Activated T-helper 2 cell treated with anti-CD3 and anti-CD28 coated beads, Interferon-gamma antibody, Interleukin-2, Interleukin-4, amounts not matched to agents 10 μg/mL and 5 μg/mL and 100 μg/mL, durations not matched to agents 14 hours and 24 hours and 36 hours (primary cell): ENCODE measurements at regions of chr19 and their contacts with region 1.

Region 1: DNA sequence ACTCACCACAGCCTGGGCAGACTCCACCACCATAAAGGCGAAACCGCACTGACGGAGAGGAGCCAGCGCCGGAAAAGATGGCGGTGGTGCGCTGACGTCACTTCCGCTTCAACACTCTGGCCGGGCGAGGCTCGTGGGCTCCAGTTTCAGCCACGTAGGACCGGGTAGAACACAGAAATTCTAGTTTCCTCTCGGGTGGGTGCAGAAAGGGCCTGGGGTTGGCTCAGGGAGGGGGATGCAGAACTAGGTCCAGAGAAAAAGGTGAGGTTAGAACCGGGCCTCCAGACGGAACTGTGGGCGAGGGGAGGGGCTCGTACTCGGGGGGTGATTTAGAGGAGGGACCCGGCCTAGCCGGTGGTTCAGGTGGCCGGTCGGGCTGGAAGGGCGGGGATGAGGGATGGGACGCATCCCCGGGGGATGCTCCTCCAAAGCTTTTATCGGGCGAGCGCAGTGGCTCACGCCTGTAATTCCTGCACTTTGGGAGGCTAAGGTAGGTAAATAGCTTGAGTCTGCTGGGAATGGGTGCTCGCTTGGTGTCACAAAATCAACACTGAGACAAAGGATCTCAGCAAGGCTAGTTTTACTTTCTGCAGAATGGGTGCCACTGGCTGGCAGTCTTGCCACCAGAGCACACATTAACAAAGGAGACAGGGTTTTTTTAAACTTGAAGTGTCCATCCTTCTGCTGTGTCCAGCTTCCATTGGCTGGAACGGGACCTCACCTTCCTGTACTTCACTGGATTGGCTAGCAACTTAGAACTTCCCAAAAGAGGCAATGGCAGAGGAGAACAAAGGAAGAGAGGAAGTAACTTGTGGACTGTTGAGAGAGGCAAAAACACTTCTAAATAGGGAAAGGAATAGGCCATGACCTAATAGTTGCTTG is at the start of gene ZNF561:
- DNase-seq: peak; percentile 84
- H3K4me3 Mint-ChIP-seq: peak within 1 kb of the TSS; percentile 93
- H3K27ac Mint-ChIP-seq: peak within 1 kb of the TSS; percentile 99
- H3K4me1 Mint-ChIP-seq: peaks cover 19% of the 10 kb centered on the region
- H3K27me3 Mint-ChIP-seq: no peaks in the 10 kb centered on the region
- total RNA-seq, gene ZNF561: 27.1 and 28.3 TPM in 2 replicates

Region 2: DNA sequence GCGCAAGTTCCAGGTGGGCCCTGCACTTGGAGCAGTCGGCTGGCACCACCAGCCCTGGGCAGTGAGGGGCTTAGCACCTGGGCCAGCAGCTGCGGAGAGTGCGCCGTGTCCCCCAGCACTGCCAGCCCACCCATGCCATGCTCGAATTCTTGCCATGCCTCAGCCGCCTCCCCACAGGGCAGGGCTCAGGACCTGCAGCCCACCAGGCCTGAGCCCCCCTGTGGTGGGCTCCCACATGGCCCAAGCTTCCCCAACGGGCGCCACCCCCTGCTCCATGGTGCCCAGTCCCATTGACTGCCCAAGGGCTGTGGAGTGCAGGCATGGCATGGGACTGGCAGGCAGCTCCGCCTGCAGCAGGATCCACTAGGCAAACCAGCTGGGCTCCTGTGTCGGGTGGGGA is 73.5 kb before region 1 on chr19:
- intact Hi-C with region 1: no loop called
- DNase-seq: no peak
- H3K4me3 Mint-ChIP-seq: no peak overlapping the region
- H3K27ac Mint-ChIP-seq: no peak overlapping the region
- H3K4me1 Mint-ChIP-seq: no peaks in the 10 kb centered on the region
- H3K27me3 Mint-ChIP-seq: no peaks in the 10 kb centered on the region

Region 3: GRCh38 chr19:9584073-9584833 is 37.1 kb before region 1 on chr19 and contains the start of gene ZNF121:
- intact Hi-C with region 1: loop called (anchors 1 kb)
- DNase-seq: peak; percentile 77
- H3K4me3 Mint-ChIP-seq: peak within 1 kb of the TSS; percentile 91
- H3K27ac Mint-ChIP-seq: peak within 1 kb of the TSS; percentile 92
- H3K4me1 Mint-ChIP-seq: peaks cover 12% of the 10 kb centered on the region
- H3K27me3 Mint-ChIP-seq: peaks cover 2% of the 10 kb centered on the region
- total RNA-seq, gene ZNF121: 57.2 and 62.2 TPM in 2 replicates

Region 4: GRCh38 chr19:9768175-9769112 is 147.0 kb after region 1 on chr19 and contains the start of gene ZNF846:
- intact Hi-C with region 1: loop called (anchors 1 kb)
- DNase-seq: peak; percentile 90
- H3K4me3 Mint-ChIP-seq: peak within 1 kb of the TSS; percentile 87
- H3K27ac Mint-ChIP-seq: peak within 1 kb of the TSS; percentile 95
- H3K4me1 Mint-ChIP-seq: peaks cover 8% of the 10 kb centered on the region
- H3K27me3 Mint-ChIP-seq: no peaks in the 10 kb centered on the region
- total RNA-seq, gene ZNF846: 3.2 and 3.7 TPM in 2 replicates

Region 5: GRCh38 chr19:9796113-9796773 is 174.8 kb after region 1 on chr19:
- intact Hi-C with region 1: loop called (anchors 1 kb)
- DNase-seq: peak; percentile 83
- H3K4me3 Mint-ChIP-seq: no peak overlapping the region
- H3K27ac Mint-ChIP-seq: peak overlapping the region; percentile 51
- H3K4me1 Mint-ChIP-seq: peaks cover 28% of the 10 kb centered on the region
- H3K27me3 Mint-ChIP-seq: no peaks in the 10 kb centered on the region

Region 6: GRCh38 chr19:9914315-9915207 is 293.2 kb after region 1 on chr19:
- intact Hi-C with region 1: loop called (anchors 10 kb)
- DNase-seq: peak; percentile 76
- H3K4me3 Mint-ChIP-seq: peak overlapping the region; percentile 45
- H3K27ac Mint-ChIP-seq: no peak overlapping the region
- H3K4me1 Mint-ChIP-seq: peaks cover 12% of the 10 kb centered on the region
- H3K27me3 Mint-ChIP-seq: peaks cover 26% of the 10 kb centered on the region